ENCODE measurements at regions of chr7 and their contacts with region 1.

Region 1: DNA sequence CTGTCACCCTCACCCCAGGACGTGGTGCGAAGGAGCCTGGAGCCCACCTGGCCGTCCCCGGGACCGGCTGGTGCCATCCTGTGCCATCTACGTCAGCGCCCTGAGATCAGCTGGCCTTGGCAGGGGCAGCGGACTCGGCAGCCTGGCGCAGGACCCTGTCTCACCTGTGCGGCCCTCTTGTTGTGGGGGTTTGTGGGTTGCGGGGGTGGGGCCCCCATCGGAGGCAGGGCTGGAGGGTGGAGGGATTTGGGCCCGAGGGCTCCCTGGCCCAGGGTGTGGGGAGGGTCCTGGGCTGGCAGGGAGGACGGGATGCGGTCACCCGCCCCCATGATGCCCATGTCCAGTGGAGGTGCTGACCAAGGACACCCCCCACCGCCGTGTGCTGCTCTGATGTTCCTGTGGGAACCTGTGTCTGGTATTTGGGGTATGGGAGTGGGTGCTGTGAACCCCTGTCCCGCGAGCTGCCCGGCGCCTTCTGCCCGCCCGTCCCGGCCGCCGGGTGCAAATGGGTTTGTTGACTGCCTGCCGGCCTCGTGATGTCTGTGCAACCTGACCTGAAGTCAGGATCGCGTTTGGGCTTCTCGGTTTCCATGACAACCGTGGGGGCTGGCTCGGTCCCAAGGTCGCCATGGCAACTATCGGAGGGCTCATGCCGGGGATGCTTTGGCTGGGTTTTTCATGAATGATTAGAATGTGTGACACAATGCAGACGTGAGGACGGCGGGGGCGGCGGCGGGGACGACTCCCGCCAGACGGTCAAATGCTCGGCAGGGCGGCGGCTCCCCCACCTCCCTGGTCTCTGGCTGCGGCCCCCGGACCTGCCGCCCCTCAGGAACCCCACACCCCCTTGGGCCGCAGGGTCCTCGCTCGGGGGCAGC is 7.3 kb downstream of the MAFK start:
- DNase-seq: peak; percentile 100
- H3K4me3 ChIP-seq: peak overlapping the region in 2 of 3 experiments; percentile 25 to 45
- H3K27ac ChIP-seq: peak overlapping the region; percentile 97
- H3K4me1 ChIP-seq: peaks cover 50% of the 10 kb centered on the region
- H3K27me3 ChIP-seq: no peaks in the 10 kb centered on the region
- CTCF ChIP-seq: no peak
- POLR2A ChIP-seq: no peak

Region 2: DNA sequence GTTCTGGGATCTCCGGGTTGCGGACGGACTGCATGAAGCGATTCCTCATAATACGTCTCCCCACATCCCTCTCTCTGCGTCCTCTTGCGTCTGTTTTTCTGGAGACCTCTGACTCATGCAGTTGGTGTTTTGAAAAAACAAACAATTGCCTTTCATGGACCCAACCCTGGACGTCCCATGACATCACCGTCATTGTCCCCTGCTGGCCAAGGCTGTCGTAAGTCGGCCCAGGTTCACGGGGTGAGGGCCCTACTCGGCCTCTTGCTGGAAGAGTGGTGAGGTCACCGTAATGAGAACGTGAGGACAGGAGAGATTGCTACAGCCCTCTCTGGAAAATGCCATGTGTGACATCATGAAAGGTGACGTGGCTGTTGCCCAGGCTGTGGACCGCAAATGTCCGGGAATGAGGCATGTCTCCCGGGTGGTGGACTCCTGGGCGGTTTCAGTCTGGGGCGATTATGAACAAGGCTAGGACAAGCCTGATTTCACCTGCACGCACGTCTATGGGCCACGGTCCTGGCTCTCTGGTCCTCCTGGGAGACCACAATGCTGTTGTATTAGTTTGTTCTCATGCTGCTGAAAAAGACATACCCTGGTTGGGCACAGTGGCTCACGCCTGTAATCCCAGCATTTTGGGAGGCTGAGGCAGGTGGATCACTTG is 17.1 kb before region 1 on chr7:
- CTCF ChIA-PET with region 1: interaction called, 3 read pairs
- POLR2A ChIA-PET with region 1: no interaction called
- dilution Hi-C with region 1: no loop called
- intact Hi-C with region 1: loop called (anchors 1 kb)
- DNase-seq: peak; percentile 85
- H3K4me3 ChIP-seq: no peak overlapping the region
- H3K27ac ChIP-seq: peak overlapping the region; percentile 87
- H3K4me1 ChIP-seq: peaks cover 9% of the 10 kb centered on the region
- H3K27me3 ChIP-seq: peaks cover 2 to 4% of the 10 kb centered on the region in 2 experiments
- CTCF ChIP-seq: no peak
- POLR2A ChIP-seq: no peak

Measured in endothelial cell of umbilical vein (primary cell).